ENCODE measurements at regions of chr4 and their contacts with region 1.

Region 1: DNA sequence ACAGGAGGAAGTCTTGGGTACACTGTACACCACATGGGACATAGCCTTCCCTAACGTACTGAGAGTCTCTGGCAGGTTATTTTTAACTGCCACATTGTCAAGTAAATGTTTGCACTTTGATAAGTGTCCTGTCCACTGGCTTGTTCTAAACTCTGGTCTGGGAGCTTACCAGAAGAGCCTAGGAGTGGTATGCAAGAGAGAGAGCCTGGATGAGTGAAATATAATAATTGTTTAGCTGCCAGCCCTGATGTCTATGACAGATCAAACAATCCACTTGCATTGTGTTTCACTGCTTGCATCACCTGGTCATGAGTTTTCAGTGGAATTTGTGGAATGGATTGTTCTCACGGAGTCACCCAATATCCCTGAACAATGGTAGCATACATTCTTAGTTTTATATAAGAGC is 91.6 kb downstream of the SHROOM3 start:
- DNase-seq: no peak

Region 2: GRCh38 chr4:76562161-76562560 is 35.6 kb after region 1 on chr4:
- intact Hi-C with region 1: loop called (anchors 5 kb)
- DNase-seq: no peak

Region 3: GRCh38 chr4:76585897-76586360 is 59.3 kb after region 1 on chr4:
- intact Hi-C with region 1: loop called (anchors 10 kb)
- DNase-seq: peak; percentile 88